ENCODE measurements at regions of chr11 and their contacts with region 1.

Region 1: DNA sequence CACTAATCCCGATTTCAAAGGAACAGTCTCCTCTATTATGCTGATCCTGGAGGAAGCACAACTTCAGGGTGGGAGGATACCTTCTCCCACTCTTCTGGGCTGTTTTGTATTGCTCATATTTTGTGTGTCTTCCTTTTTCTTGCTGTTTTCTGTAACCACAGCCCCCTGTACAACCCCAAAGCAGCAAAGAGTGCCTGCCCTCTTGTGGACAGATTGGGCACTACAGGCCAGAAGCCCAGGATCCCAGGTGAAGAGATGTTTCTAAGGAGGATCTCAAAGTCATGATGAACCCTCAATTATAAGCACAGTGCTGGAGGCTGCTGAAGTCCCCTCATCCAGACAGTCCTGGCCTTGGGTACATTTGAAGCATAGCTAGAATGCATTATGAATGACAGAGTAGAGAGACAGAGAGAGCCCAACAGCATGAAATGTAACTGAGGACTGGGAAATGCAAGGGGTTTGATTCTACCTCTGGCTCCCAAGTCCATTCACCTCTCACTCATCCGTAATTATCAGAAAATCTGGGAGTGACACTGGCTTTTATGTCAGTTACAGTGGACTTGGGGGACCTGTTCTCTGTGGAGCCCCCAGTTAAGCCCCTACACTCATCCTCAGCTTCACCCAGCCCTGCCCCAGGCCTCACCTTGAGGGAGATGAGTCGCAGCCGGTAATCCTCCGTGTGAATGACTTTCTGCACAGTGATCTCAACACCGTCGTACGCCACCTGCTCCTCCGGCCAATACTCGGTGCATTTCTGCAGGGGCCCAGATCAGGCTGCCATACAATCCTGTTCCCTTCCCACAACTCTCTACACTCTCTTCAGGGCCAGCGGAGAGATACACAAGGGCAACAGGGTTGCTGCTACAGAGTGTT is 6.2 kb upstream of the IGSF22 start:
- DNase-seq: peak; percentile 67 to 73 (median 68)
- ATAC-seq: peak; percentile 80
- H3K4me3 ChIP-seq: no peak overlapping the region
- H3K27ac ChIP-seq: no peak overlapping the region
- H3K4me1 ChIP-seq: peaks cover 0 to 3% of the 10 kb centered on the region in 2 experiments; a peak in 1 of 5 replicates
- H3K27me3 ChIP-seq: peaks cover 16 to 56% of the 10 kb centered on the region in 2 experiments
- CTCF ChIP-seq: peak; percentile 76 to 95 (median 90)
- EP300 ChIP-seq: no peak
- POLR2A ChIP-seq: no peak
- RAD21 ChIP-seq: peak; percentile 81 to 84

Region 2: DNA sequence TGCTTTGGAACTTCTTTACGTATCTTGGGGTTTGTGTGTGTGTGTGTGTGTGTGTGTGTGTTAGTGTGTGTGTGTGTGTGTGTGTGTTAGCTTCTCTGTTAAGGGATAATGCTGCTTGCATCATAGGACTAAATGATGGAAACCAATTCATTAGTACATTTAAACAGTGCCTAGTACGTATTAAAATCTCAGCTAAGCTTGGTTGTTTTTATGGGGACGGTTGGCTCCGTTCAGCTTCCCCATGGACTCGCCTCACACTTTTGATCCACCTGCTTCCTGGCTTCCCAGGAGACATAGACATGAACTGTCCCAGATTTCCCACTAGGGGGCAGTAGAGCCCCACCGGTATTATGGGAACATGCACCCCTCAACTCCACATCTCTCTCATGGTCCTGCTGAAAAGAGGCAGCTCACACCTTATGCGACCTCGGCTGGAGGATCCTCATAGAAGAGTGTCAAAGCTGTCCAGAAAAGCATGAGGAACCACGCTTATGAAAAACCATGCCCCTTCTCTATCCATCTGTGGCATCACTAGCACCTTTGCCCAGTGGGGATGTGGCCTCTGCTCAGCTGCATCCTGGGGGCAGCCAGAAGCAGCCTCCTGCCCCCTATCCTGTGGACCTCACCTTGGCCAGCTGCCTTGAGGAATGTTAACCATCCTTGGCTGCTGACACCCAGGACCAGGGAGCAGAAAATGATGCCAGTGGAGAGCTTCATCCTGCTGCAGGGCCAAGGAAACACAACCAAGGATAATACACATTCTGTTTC is 616.6 kb before region 1 on chr11:
- CTCF ChIA-PET with region 1: no interaction called
- POLR2A ChIA-PET with region 1: no interaction called
- in situ Hi-C with region 1: no loop called
- intact Hi-C with region 1: loop called (anchors 10 kb)
- DNase-seq: peak; percentile 77 to 80 (median 77)
- ATAC-seq: peak; percentile 98
- H3K4me3 ChIP-seq: no peak overlapping the region
- H3K27ac ChIP-seq: no peak overlapping the region
- H3K4me1 ChIP-seq: no peaks in the 10 kb centered on the region
- H3K27me3 ChIP-seq: peaks cover 11 to 17% of the 10 kb centered on the region in 2 experiments; a peak in 4 of 5 replicates
- CTCF ChIP-seq: peak; percentile 83 to 87 (median 84)
- EP300 ChIP-seq: no peak
- POLR2A ChIP-seq: no peak
- RAD21 ChIP-seq: peak; percentile 63 to 83

Region 3: GRCh38 chr11:18526521-18527296 is 205.5 kb before region 1 on chr11 and contains the start of gene TSG101:
- CTCF ChIA-PET with region 1: no interaction called
- POLR2A ChIA-PET with region 1: no interaction called
- in situ Hi-C with region 1: loop called (anchors 25 kb)
- intact Hi-C with region 1: no loop called
- DNase-seq: peak; percentile 93 to 96 (median 93)
- ATAC-seq: peak; percentile 95
- H3K4me3 ChIP-seq: peak within 1 kb of the TSS; percentile 84
- H3K27ac ChIP-seq: peak within 1 kb of the TSS; percentile 97
- H3K4me1 ChIP-seq: no peaks in the 10 kb centered on the region; a peak in 1 of 5 replicates
- H3K27me3 ChIP-seq: no peaks in the 10 kb centered on the region
- CTCF ChIP-seq: no peak
- EP300 ChIP-seq: no peak
- POLR2A ChIP-seq: peak; percentile 98
- RAD21 ChIP-seq: no peak; a peak in 1 of 4 replicates
- polyA plus RNA-seq, gene TSG101: 24.6 to 30.0 TPM

Region 4: GRCh38 chr11:18657673-18658072 is 74.5 kb before region 1 on chr11:
- CTCF ChIA-PET with region 1: no interaction called
- POLR2A ChIA-PET with region 1: no interaction called
- in situ Hi-C with region 1: loop called (anchors 5 kb)
- intact Hi-C with region 1: no loop called
- DNase-seq: peak in 1 of 4 experiments; percentile 18
- ATAC-seq: no peak
- H3K4me3 ChIP-seq: no peak overlapping the region
- H3K27ac ChIP-seq: no peak overlapping the region
- H3K4me1 ChIP-seq: no peaks in the 10 kb centered on the region; a peak in 1 of 5 replicates
- H3K27me3 ChIP-seq: no peaks in the 10 kb centered on the region
- CTCF ChIP-seq: no peak
- EP300 ChIP-seq: no peak
- POLR2A ChIP-seq: no peak
- RAD21 ChIP-seq: no peak

Region 5: GRCh38 chr11:18768472-18768901 is 36.3 kb after region 1 on chr11:
- CTCF ChIA-PET with region 1: no interaction called
- POLR2A ChIA-PET with region 1: no interaction called
- in situ Hi-C with region 1: no loop called
- intact Hi-C with region 1: loop called (anchors 2 kb)
- DNase-seq: no peak
- ATAC-seq: no peak
- H3K4me3 ChIP-seq: no peak overlapping the region
- H3K27ac ChIP-seq: no peak overlapping the region
- H3K4me1 ChIP-seq: no peaks in the 10 kb centered on the region
- H3K27me3 ChIP-seq: peaks cover 2 to 39% of the 10 kb centered on the region in 2 experiments; a peak in 4 of 5 replicates
- CTCF ChIP-seq: no peak
- EP300 ChIP-seq: no peak
- POLR2A ChIP-seq: no peak
- RAD21 ChIP-seq: no peak

Region 6: GRCh38 chr11:18865951-18866350 is 133.8 kb after region 1 on chr11:
- CTCF ChIA-PET with region 1: no interaction called
- POLR2A ChIA-PET with region 1: no interaction called
- in situ Hi-C with region 1: no loop called
- intact Hi-C with region 1: no loop called
- DNase-seq: no peak
- ATAC-seq: no peak
- H3K4me3 ChIP-seq: no peak overlapping the region
- H3K27ac ChIP-seq: no peak overlapping the region
- H3K4me1 ChIP-seq: no peaks in the 10 kb centered on the region
- H3K27me3 ChIP-seq: peaks cover 0 to 10% of the 10 kb centered on the region in 2 experiments; a peak in 3 of 5 replicates
- CTCF ChIP-seq: no peak
- EP300 ChIP-seq: no peak
- POLR2A ChIP-seq: no peak
- RAD21 ChIP-seq: no peak

Measured in K562 (cell line).